ENCODE measurements at regions of chr16 and their contacts with region 1.

Region 1: DNA sequence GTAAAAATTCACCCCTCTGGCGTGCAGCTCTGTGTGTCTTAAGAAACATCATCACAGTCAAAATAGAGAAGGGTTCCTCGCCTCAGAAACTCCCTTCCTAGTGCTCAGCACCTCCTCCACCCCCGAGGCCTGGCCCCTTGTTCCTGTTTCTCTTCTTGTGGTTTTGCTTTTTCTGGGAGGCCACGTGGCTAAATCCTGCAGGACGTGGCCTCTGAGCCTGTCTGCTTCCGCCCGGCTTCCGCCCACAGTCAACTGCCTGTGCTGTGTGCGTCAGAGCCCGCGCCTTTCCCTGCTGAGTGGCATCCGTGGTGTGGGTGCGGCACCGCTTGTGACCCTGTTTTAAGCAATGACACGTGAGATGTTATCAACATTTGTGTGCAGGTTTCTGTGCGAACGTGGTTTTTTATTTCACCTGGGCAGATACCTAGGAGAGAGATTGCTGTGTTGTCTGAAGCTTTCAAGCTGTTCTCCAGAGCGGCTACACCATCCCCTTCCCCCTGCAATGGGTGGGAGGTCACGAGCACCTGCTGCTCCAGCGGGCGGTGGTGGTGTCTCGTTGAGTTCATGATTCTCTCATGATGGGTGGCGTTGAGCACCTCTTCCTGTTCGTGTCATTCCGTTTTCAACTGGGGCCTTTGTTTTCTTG is 21.7 kb downstream of the ACSF3 start:
- DNase-seq: peak; percentile 96
- ATAC-seq: peak; percentile 84
- H3K4me3 ChIP-seq: peak overlapping the region; percentile 35 to 57 (median 51)
- H3K4me3 Mint-ChIP-seq: peak overlapping the region; percentile 88
- H3K27ac ChIP-seq: peak overlapping the region; percentile 83 to 85
- H3K27ac Mint-ChIP-seq: peak overlapping the region; percentile 99
- H3K4me1 ChIP-seq: peaks cover 42 to 44% of the 10 kb centered on the region in 2 donors
- H3K4me1 Mint-ChIP-seq: peaks cover 8% of the 10 kb centered on the region
- H3K27me3 ChIP-seq: no peaks in the 10 kb centered on the region
- H3K27me3 Mint-ChIP-seq: no peaks in the 10 kb centered on the region
- CTCF ChIP-seq: no peak

Region 2: GRCh38 chr16:88871730-88872416 is 243.5 kb before region 1 on chr16:
- CTCF ChIA-PET with region 1: no interaction called
- POLR2A ChIA-PET with region 1: interaction called, 10 read pairs
- intact Hi-C with region 1: no loop called
- DNase-seq: no peak
- ATAC-seq: no peak
- H3K4me3 ChIP-seq: no peak overlapping the region
- H3K4me3 Mint-ChIP-seq: no peak overlapping the region
- H3K27ac ChIP-seq: no peak overlapping the region
- H3K27ac Mint-ChIP-seq: no peak overlapping the region
- H3K4me1 ChIP-seq: peaks cover 13 to 19% of the 10 kb centered on the region in 2 donors
- H3K4me1 Mint-ChIP-seq: peaks cover 9% of the 10 kb centered on the region
- H3K27me3 ChIP-seq: peaks cover 0 to 34% (median 4%) of the 10 kb centered on the region in 4 experiments
- H3K27me3 Mint-ChIP-seq: peaks cover 10% of the 10 kb centered on the region
- CTCF ChIP-seq: no peak

Region 3: DNA sequence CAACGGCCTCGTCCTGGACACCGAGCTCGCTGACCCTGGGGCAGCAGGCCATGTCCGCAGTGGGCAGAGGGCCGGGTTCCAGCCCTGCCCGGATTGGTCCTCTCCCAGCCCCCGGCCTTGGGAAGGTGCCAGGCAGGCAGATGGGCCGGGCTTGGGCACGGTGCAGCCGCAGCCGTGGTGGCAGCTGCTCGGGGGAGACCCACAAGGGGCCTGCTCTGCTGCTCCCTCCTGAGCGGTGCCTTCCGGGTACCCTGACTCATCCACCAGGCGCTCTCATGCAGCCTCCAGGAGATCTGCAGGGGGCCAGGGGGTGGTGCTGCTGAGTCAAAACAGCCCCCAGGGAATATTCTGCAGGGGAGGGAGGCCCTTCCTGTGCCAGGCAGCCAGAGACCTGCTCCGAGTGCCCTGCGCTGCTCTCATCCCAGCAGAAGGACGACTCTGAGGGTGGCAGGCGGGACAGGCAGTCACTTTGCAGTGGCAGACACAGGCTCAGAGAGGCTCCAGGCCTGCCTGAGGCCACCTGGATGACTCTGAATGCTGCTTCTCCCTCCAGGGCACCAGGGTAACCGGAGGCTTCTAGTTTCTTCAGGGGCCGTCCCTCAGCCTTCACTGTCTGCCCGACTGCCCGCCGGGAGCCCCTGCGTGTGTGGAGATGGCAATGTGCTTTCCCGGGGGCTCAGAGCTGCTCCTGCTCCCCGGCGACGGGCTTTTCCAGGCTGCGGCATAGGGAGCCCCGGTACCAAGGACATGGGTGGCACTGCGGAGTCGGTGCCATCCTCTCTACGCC is 190.0 kb before region 1 on chr16:
- CTCF ChIA-PET with region 1: interaction called, 4 read pairs
- POLR2A ChIA-PET with region 1: no interaction called
- intact Hi-C with region 1: loop called (anchors 5 kb)
- DNase-seq: peak; percentile 82
- ATAC-seq: peak; percentile 96
- H3K4me3 ChIP-seq: no peak overlapping the region
- H3K4me3 Mint-ChIP-seq: no peak overlapping the region
- H3K27ac ChIP-seq: no peak overlapping the region
- H3K27ac Mint-ChIP-seq: peak overlapping the region; percentile 78
- H3K4me1 ChIP-seq: peaks cover 51 to 63% of the 10 kb centered on the region in 2 donors
- H3K4me1 Mint-ChIP-seq: peaks cover 60% of the 10 kb centered on the region
- H3K27me3 ChIP-seq: no peaks in the 10 kb centered on the region
- H3K27me3 Mint-ChIP-seq: no peaks in the 10 kb centered on the region
- CTCF ChIP-seq: peak; percentile 66

Region 4: GRCh38 chr16:88936556-88937205 is 178.7 kb before region 1 on chr16:
- CTCF ChIA-PET with region 1: interaction called, 3 read pairs
- POLR2A ChIA-PET with region 1: interaction called, 3 read pairs
- intact Hi-C with region 1: loop called (anchors 1 kb)
- DNase-seq: peak; percentile 80
- ATAC-seq: peak; percentile 31
- H3K4me3 ChIP-seq: peak overlapping the region; percentile 35 to 69 (median 49)
- H3K4me3 Mint-ChIP-seq: peak overlapping the region; percentile 84
- H3K27ac ChIP-seq: peak overlapping the region; percentile 35 to 76
- H3K27ac Mint-ChIP-seq: peak overlapping the region; percentile 90
- H3K4me1 ChIP-seq: peaks cover 45 to 50% of the 10 kb centered on the region in 2 donors
- H3K4me1 Mint-ChIP-seq: peaks cover 48% of the 10 kb centered on the region
- H3K27me3 ChIP-seq: no peaks in the 10 kb centered on the region
- H3K27me3 Mint-ChIP-seq: no peaks in the 10 kb centered on the region
- CTCF ChIP-seq: no peak

Region 5: GRCh38 chr16:88941913-88942909 is 173.1 kb before region 1 on chr16:
- CTCF ChIA-PET with region 1: interaction called, 3 read pairs
- POLR2A ChIA-PET with region 1: interaction called, 3 read pairs
- intact Hi-C with region 1: loop called (anchors 2 kb)
- DNase-seq: peak; percentile 85
- ATAC-seq: peak; percentile 67
- H3K4me3 ChIP-seq: peak overlapping the region in 4 of 5 experiments; percentile 22 to 46 (median 30)
- H3K4me3 Mint-ChIP-seq: peak overlapping the region; percentile 78
- H3K27ac ChIP-seq: no peak overlapping the region
- H3K27ac Mint-ChIP-seq: peak overlapping the region; percentile 81
- H3K4me1 ChIP-seq: peaks cover 29 to 39% of the 10 kb centered on the region in 2 donors
- H3K4me1 Mint-ChIP-seq: peaks cover 44% of the 10 kb centered on the region
- H3K27me3 ChIP-seq: no peaks in the 10 kb centered on the region
- H3K27me3 Mint-ChIP-seq: no peaks in the 10 kb centered on the region
- CTCF ChIP-seq: peak; percentile 86

Region 6: DNA sequence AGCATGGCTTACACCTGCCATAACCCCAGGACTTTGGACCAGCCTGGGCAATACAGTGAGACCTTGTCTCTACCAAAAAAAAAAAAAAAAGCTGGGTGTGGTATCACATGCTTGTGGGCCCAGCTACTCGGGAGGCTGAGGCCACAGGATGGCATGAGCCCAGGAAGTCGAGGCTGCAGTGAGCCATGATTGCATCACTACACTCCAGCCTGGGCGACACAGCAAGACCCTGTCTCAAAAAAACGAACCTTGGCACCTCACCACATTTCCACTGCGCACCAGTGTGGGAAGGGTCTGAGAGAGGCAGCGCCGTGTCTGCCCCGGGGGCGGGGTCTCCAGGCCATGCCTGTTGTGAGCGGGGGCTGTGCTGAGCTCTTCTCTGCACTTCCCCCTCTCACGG is 15.4 kb before region 1 on chr16:
- CTCF ChIA-PET with region 1: interaction called, 18 read pairs
- POLR2A ChIA-PET with region 1: interaction called, 14 read pairs
- intact Hi-C with region 1: loop called (anchors 1 kb)
- DNase-seq: no peak
- ATAC-seq: no peak
- H3K4me3 ChIP-seq: no peak overlapping the region
- H3K4me3 Mint-ChIP-seq: no peak overlapping the region
- H3K27ac ChIP-seq: no peak overlapping the region
- H3K27ac Mint-ChIP-seq: peak overlapping the region; percentile 59
- H3K4me1 ChIP-seq: peaks cover 47 to 53% of the 10 kb centered on the region in 2 donors
- H3K4me1 Mint-ChIP-seq: peaks cover 51% of the 10 kb centered on the region
- H3K27me3 ChIP-seq: no peaks in the 10 kb centered on the region
- H3K27me3 Mint-ChIP-seq: no peaks in the 10 kb centered on the region
- CTCF ChIP-seq: no peak

Region 7: DNA sequence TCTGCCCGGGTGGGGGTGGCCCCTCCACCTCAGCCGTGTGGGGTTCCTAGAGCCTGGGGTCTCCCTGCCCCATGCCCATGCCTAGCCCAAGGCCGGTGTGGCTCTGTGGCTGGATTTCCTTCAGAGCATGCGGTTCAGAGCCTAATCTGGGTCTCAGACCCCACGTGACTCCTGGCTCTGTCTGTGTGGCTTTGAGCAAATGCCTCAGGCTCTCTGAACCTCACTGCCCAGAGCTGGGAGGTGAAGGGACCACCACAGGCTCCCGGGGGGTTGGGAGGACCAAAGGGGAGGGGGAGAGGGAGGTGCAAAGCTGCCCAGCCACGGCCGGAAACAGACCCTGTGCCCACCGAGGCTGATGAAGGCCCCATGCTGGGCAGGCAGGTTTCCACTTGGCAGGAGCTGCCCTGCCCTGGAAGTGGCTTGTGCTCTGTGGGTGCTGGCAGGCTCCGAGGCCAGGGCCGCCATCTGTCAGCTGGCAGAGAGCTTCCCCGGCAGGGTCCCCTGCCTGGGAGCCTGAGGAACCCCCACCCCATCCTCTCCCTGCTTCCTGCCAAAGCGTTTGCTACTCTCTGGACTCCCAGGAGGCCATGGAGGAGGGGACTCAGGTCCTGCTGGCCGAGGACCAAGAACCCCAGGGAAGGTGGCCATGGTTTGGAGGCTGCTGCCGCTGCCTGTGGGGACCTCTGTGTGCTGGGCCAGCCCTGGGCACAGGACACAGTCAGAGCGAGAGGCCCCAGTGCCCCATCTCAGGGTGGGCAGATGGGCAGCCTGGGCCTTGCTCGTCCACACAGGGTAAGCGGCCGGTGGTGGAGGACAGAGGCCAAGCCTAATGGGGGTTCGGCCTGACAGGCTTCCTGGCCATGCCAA is 60.2 kb after region 1 on chr16:
- CTCF ChIA-PET with region 1: no interaction called
- POLR2A ChIA-PET with region 1: no interaction called
- intact Hi-C with region 1: no loop called
- DNase-seq: no peak
- ATAC-seq: no peak
- H3K4me3 ChIP-seq: no peak overlapping the region
- H3K4me3 Mint-ChIP-seq: no peak overlapping the region
- H3K27ac ChIP-seq: no peak overlapping the region
- H3K27ac Mint-ChIP-seq: no peak overlapping the region
- H3K4me1 ChIP-seq: peaks cover 10 to 18% of the 10 kb centered on the region in 2 donors
- H3K4me1 Mint-ChIP-seq: peaks cover 11% of the 10 kb centered on the region
- H3K27me3 ChIP-seq: peaks cover 0 to 7% (median 2%) of the 10 kb centered on the region in 4 experiments
- H3K27me3 Mint-ChIP-seq: no peaks in the 10 kb centered on the region
- CTCF ChIP-seq: no peak

Region 8: GRCh38 chr16:89256651-89257254 is 141.4 kb after region 1 on chr16:
- CTCF ChIA-PET with region 1: no interaction called
- POLR2A ChIA-PET with region 1: no interaction called
- intact Hi-C with region 1: no loop called
- DNase-seq: peak; percentile 59
- ATAC-seq: peak; percentile 77
- H3K4me3 ChIP-seq: peak overlapping the region in 4 of 5 experiments; percentile 12 to 29 (median 16)
- H3K4me3 Mint-ChIP-seq: peak overlapping the region; percentile 59
- H3K27ac ChIP-seq: no peak overlapping the region
- H3K27ac Mint-ChIP-seq: peak overlapping the region; percentile 6
- H3K4me1 ChIP-seq: peaks cover 16 to 19% of the 10 kb centered on the region in 2 donors
- H3K4me1 Mint-ChIP-seq: peaks cover 20% of the 10 kb centered on the region
- H3K27me3 ChIP-seq: peaks cover 0 to 27% (median 16%) of the 10 kb centered on the region in 4 experiments
- H3K27me3 Mint-ChIP-seq: peaks cover 28% of the 10 kb centered on the region
- CTCF ChIP-seq: no peak